Naive thymus-derived CD4-positive, alpha-beta T cell (primary cell): ENCODE measurements at regions of chr17 and their contacts with region 1.

Region 1: DNA sequence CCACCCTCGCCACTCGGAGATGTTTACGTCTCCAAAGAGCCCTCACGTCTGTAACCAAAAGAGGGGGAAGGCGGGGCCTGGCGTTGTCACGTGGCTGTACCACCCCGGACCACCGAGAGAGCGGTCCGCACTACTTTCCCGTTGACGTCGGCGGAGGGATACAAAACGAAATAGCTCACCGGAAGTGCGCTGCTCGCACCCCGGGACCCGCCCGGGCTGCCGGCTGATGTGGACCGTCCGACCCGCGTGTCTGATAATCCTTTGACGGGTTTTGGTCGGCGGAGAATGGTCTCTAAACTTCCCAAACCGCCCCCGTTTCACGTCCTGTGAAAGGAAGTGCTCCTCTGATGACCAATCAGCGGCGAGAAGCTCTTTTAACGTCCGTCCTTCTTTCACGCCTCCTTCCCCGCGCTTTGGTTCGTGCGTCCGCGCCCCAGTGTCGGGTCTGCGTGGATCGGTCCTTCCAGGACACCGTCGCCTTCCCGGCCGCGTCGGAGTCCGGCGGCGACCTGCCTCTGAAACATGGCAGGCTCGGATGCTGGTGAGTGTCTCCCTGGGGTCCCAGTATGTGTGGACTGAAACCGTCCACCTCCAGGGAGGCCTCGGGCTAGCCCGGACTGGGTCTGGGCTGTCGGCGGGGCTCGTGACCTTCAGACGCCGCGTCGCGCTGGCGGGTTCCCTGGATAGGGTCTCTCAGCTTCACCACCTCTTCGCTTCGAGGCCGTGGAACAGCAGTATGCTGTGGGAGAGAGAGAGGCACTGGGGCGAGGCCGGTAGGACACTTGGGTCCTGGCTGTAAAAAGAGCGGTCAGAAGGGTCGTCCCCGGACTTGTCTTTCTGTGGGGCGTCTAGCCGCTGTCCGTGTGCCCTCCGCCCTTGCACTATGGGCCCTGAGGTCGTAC is at the start of gene CEP95:
- DNase-seq: peak in 7 of 9 donors; percentile 85 to 98 (median 97)
- ATAC-seq: peak; percentile 78
- H3K4me3 ChIP-seq: peak within 1 kb of the TSS; percentile 98
- H3K4me3 Mint-ChIP-seq: peak within 1 kb of the TSS; percentile 97 to 100 (median 99)
- H3K27ac ChIP-seq: peak within 1 kb of the TSS; percentile 100
- H3K27ac Mint-ChIP-seq: peak within 1 kb of the TSS; percentile 99 to 100 (median 100)
- H3K4me1 ChIP-seq: peaks cover 41 to 42% of the 10 kb centered on the region in 2 donors
- H3K4me1 Mint-ChIP-seq: peaks cover 31 to 84% (median 70%) of the 10 kb centered on the region in 7 donors
- H3K27me3 ChIP-seq: no peaks in the 10 kb centered on the region
- H3K27me3 Mint-ChIP-seq: peaks cover 0 to 11% (median 0%) of the 10 kb centered on the region in 5 donors
- total RNA-seq, gene CEP95: 46.7 to 192 (median 115) TPM

Region 2: GRCh38 chr17:63773381-63774140 is 733.3 kb before region 1 on chr17 and contains the start of gene CCDC47:
- CTCF ChIA-PET with region 1: interaction called, 3 read pairs
- POLR2A ChIA-PET with region 1: interaction called, 27 read pairs
- intact Hi-C with region 1: loop called in 1 of 2 experiments (anchors 1 kb)
- DNase-seq: peak; percentile 92 to 99 (median 99)
- ATAC-seq: peak; percentile 88
- H3K4me3 ChIP-seq: peak within 1 kb of the TSS; percentile 85
- H3K4me3 Mint-ChIP-seq: peak within 1 kb of the TSS; percentile 91 to 99 (median 98)
- H3K27ac ChIP-seq: peak within 1 kb of the TSS; percentile 100
- H3K27ac Mint-ChIP-seq: peak within 1 kb of the TSS; percentile 97 to 100 (median 99)
- H3K4me1 ChIP-seq: peaks cover 21 to 46% of the 10 kb centered on the region in 2 donors
- H3K4me1 Mint-ChIP-seq: peaks cover 31 to 84% (median 62%) of the 10 kb centered on the region in 7 donors
- H3K27me3 ChIP-seq: no peaks in the 10 kb centered on the region
- H3K27me3 Mint-ChIP-seq: peaks cover 0 to 7% (median 0%) of the 10 kb centered on the region in 5 donors
- total RNA-seq, gene CCDC47: 31.8 to 62.9 (median 34.7) TPM

Region 3: DNA sequence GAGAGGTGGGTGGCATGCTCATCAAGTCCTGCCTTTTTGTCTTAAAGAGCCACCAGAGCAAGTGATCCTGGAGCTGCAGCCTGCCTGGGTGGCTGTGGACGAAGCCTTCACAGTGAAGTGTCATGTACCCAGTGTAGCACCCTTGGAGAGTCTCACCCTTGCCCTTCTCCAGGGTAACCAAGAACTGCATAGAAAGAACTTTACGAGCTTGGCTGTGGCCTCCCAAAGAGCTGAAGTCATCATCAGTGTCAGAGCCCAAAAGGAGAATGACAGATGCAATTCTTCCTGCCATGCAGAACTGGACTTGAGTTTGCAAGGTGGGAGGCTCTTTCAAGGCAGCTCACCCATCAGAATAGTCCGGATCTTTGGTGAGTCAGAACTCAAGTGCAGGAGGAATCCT is 647.6 kb before region 1 on chr17:
- CTCF ChIA-PET with region 1: no interaction called
- POLR2A ChIA-PET with region 1: no interaction called
- intact Hi-C with region 1: no loop called
- DNase-seq: no peak
- ATAC-seq: no peak
- H3K4me3 ChIP-seq: no peak overlapping the region
- H3K4me3 Mint-ChIP-seq: no peak overlapping the region
- H3K27ac ChIP-seq: no peak overlapping the region
- H3K27ac Mint-ChIP-seq: no peak overlapping the region
- H3K4me1 ChIP-seq: no peaks in the 10 kb centered on the region
- H3K4me1 Mint-ChIP-seq: no peaks in the 10 kb centered on the region
- H3K27me3 ChIP-seq: no peaks in the 10 kb centered on the region
- H3K27me3 Mint-ChIP-seq: peaks cover 0 to 38% (median 0%) of the 10 kb centered on the region in 5 donors

Region 4: GRCh38 chr17:64129764-64130558 is 376.9 kb before region 1 on chr17 and contains the start of gene ERN1:
- CTCF ChIA-PET with region 1: no interaction called
- POLR2A ChIA-PET with region 1: interaction called, 12 read pairs
- intact Hi-C with region 1: loop called (anchors 1 kb)
- DNase-seq: peak; percentile 84 to 93 (median 91)
- ATAC-seq: peak; percentile 96
- H3K4me3 ChIP-seq: peak within 1 kb of the TSS; percentile 69
- H3K4me3 Mint-ChIP-seq: peak within 1 kb of the TSS; percentile 85 to 97 (median 94)
- H3K27ac ChIP-seq: peak within 1 kb of the TSS; percentile 77
- H3K27ac Mint-ChIP-seq: peak within 1 kb of the TSS; percentile 83 to 98 (median 93)
- H3K4me1 ChIP-seq: peaks cover 12 to 32% of the 10 kb centered on the region in 2 donors
- H3K4me1 Mint-ChIP-seq: peaks cover 28 to 57% (median 53%) of the 10 kb centered on the region in 7 donors
- H3K27me3 ChIP-seq: no peaks in the 10 kb centered on the region
- H3K27me3 Mint-ChIP-seq: no peaks in the 10 kb centered on the region
- total RNA-seq, gene ERN1: 52.6 to 110 (median 62.9) TPM

Region 5: DNA sequence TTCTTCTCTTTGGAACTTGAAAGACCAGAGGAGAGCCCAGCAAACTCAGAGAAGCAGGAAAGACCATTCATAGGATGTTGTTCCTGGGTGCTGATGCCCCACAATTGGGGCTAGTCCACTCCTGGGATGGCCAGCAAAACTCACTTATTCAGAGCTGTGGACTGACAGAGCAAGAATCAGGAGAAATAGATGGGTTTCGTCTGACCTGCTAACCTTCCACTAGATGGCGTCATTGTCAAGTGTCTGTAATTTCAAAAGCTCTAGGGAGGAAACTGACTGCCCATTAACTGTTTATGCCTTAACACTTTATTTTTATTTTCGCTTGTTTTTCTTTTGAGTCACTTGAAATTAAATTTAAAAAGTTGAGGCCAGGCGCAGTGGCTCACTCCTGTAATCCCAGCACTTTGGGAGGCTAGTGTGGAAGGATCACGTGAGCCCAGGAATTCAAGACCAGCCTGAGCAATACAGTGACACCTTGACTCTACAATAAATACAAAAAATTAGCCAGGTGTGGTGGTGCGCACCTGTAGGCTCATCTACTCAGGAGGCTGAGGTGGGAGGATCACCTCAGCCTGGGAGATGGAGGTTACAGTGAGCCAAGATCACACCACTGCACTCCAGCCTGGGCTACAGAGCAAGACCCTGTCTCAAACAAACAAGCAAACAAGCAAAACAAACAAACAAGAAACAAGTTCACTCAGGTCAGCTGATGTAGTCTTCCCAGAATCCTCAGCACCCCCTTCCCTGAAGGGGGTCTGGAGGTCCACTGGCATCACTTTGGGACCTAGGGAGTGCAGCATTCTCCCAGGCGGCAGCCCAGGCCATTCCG is 86.5 kb before region 1 on chr17:
- CTCF ChIA-PET with region 1: interaction called, 28 read pairs
- POLR2A ChIA-PET with region 1: interaction called, 62 read pairs
- intact Hi-C with region 1: loop called in 1 of 2 experiments (anchors 1 kb)
- DNase-seq: peak in 7 of 9 donors; percentile 54 to 83 (median 75)
- ATAC-seq: peak; percentile 88
- H3K4me3 ChIP-seq: no peak overlapping the region
- H3K4me3 Mint-ChIP-seq: no peak overlapping the region
- H3K27ac ChIP-seq: no peak overlapping the region
- H3K27ac Mint-ChIP-seq: no peak overlapping the region
- H3K4me1 ChIP-seq: no peaks in the 10 kb centered on the region
- H3K4me1 Mint-ChIP-seq: peaks cover 0 to 11% (median 0%) of the 10 kb centered on the region in 7 donors
- H3K27me3 ChIP-seq: peaks cover 0 to 3% of the 10 kb centered on the region in 2 donors
- H3K27me3 Mint-ChIP-seq: peaks cover 0 to 5% (median 0%) of the 10 kb centered on the region in 5 donors

Region 6: GRCh38 chr17:64653325-64653984 is 146.6 kb after region 1 on chr17:
- CTCF ChIA-PET with region 1: interaction called, 4 read pairs
- POLR2A ChIA-PET with region 1: interaction called, 26 read pairs
- intact Hi-C with region 1: loop called (anchors 1 kb)
- DNase-seq: no peak
- ATAC-seq: no peak
- H3K4me3 ChIP-seq: no peak overlapping the region
- H3K4me3 Mint-ChIP-seq: peak overlapping the region in 1 of 10 donors; percentile 0
- H3K27ac ChIP-seq: no peak overlapping the region
- H3K27ac Mint-ChIP-seq: peak overlapping the region in 4 of 9 donors; percentile 8 to 65 (median 36)
- H3K4me1 ChIP-seq: peaks cover 6 to 8% of the 10 kb centered on the region in 2 donors
- H3K4me1 Mint-ChIP-seq: peaks cover 27 to 73% (median 53%) of the 10 kb centered on the region in 7 donors
- H3K27me3 ChIP-seq: no peaks in the 10 kb centered on the region
- H3K27me3 Mint-ChIP-seq: no peaks in the 10 kb centered on the region

Region 7: GRCh38 chr17:64920026-64920418 is 413.2 kb after region 1 on chr17:
- CTCF ChIA-PET with region 1: no interaction called
- POLR2A ChIA-PET with region 1: interaction called, 3 read pairs
- intact Hi-C with region 1: loop called in 1 of 2 experiments (anchors 10 kb)
- DNase-seq: peak in 4 of 9 donors; percentile 11 to 26 (median 14)
- ATAC-seq: no peak
- H3K4me3 ChIP-seq: peak overlapping the region; percentile 62
- H3K4me3 Mint-ChIP-seq: peak overlapping the region; percentile 84 to 94 (median 88)
- H3K27ac ChIP-seq: peak overlapping the region; percentile 90
- H3K27ac Mint-ChIP-seq: peak overlapping the region; percentile 83 to 97 (median 92)
- H3K4me1 ChIP-seq: no peaks in the 10 kb centered on the region
- H3K4me1 Mint-ChIP-seq: peaks cover 0 to 22% (median 7%) of the 10 kb centered on the region in 7 donors
- H3K27me3 ChIP-seq: no peaks in the 10 kb centered on the region
- H3K27me3 Mint-ChIP-seq: peaks cover 0 to 4% (median 0%) of the 10 kb centered on the region in 5 donors

Region 8: GRCh38 chr17:66207936-66208335 is 1701.1 kb after region 1 on chr17:
- CTCF ChIA-PET with region 1: no interaction called
- POLR2A ChIA-PET with region 1: no interaction called
- intact Hi-C with region 1: no loop called
- DNase-seq: no peak
- ATAC-seq: no peak
- H3K4me3 ChIP-seq: no peak overlapping the region
- H3K4me3 Mint-ChIP-seq: no peak overlapping the region
- H3K27ac ChIP-seq: no peak overlapping the region
- H3K27ac Mint-ChIP-seq: no peak overlapping the region
- H3K4me1 ChIP-seq: no peaks in the 10 kb centered on the region
- H3K4me1 Mint-ChIP-seq: peaks cover 0 to 14% (median 2%) of the 10 kb centered on the region in 7 donors
- H3K27me3 ChIP-seq: no peaks in the 10 kb centered on the region
- H3K27me3 Mint-ChIP-seq: peaks cover 0 to 20% (median 0%) of the 10 kb centered on the region in 5 donors